Naive thymus-derived CD4-positive, alpha-beta T cell (primary cell): ENCODE measurements at regions of chr12 and their contacts with region 1.

Region 1: DNA sequence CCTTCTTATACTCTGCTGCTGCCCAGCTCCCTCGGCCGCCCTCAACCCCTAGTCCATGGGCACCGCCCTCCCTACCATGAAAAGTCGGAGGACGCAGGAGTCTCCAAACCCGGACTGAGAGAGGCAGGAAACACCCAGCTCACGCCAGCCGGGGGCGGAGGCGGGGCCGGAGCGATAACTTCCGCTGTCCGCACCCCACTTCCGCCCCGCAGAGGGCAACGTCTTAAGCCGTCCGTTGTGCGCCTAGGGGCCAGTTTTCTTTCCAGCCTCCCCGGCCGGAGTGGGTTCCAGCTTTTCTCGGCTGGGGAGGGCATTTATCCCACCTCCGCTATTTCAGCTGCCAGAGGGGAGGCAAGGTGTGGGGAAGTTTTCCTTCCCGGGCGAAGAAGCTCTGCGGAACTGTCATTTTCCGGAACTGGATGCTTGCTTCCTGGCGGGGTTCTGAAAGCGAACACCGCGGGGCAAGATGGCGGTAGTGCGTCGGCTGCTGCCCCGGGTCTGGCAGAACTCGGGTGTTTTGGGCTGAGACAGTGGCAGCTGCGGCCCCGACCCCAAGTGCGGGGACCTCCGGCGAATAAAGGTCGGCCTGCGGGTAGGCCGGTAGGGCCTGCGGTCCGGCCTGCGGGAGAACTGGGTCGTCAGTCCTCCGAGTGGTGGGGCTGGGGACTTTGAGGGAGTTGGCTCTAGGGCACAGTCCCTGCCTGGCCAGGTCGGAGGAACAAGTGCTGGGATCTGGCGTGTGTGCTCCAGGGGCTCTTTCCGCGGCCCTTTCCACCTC is at the starts of genes KCTD10 and UBE3B:
- DNase-seq: peak; percentile 81 to 90 (median 87)
- ATAC-seq: peak; percentile 97
- H3K4me3 ChIP-seq: peak within 1 kb of the TSS; percentile 93
- H3K4me3 Mint-ChIP-seq: peak within 1 kb of the TSS; percentile 89 to 99 (median 96)
- H3K27ac ChIP-seq: peak within 1 kb of the TSS; percentile 90
- H3K27ac Mint-ChIP-seq: peak within 1 kb of the TSS; percentile 96 to 99 (median 98)
- H3K4me1 ChIP-seq: peaks cover 21 to 26% of the 10 kb centered on the region in 2 donors
- H3K4me1 Mint-ChIP-seq: peaks cover 24 to 60% (median 49%) of the 10 kb centered on the region in 7 donors
- H3K27me3 ChIP-seq: no peaks in the 10 kb centered on the region
- H3K27me3 Mint-ChIP-seq: no peaks in the 10 kb centered on the region
- total RNA-seq, gene KCTD10: 28.6 to 41.1 (median 29.1) TPM
- total RNA-seq, gene UBE3B: 28.7 to 62.8 (median 35.6) TPM

Region 2: GRCh38 chr12:109052414-109053323 is 424.7 kb before region 1 on chr12 and contains the start of gene USP30:
- CTCF ChIA-PET with region 1: no interaction called
- POLR2A ChIA-PET with region 1: no interaction called
- intact Hi-C with region 1: loop called in 1 of 2 experiments (anchors 1 kb)
- DNase-seq: peak; percentile 68 to 86 (median 77)
- ATAC-seq: peak; percentile 93
- H3K4me3 ChIP-seq: peak within 1 kb of the TSS; percentile 91
- H3K4me3 Mint-ChIP-seq: peak within 1 kb of the TSS; percentile 86 to 99 (median 96)
- H3K27ac ChIP-seq: peak within 1 kb of the TSS; percentile 89
- H3K27ac Mint-ChIP-seq: peak within 1 kb of the TSS; percentile 89 to 98 (median 95)
- H3K4me1 ChIP-seq: peaks cover 13% of the 10 kb centered on the region in 2 donors
- H3K4me1 Mint-ChIP-seq: peaks cover 14 to 27% (median 17%) of the 10 kb centered on the region in 7 donors
- H3K27me3 ChIP-seq: no peaks in the 10 kb centered on the region
- H3K27me3 Mint-ChIP-seq: no peaks in the 10 kb centered on the region
- total RNA-seq, gene USP30: 7.8 to 15.7 (median 12.9) TPM

Region 3: GRCh38 chr12:109154451-109155438 is 322.6 kb before region 1 on chr12:
- CTCF ChIA-PET with region 1: no interaction called
- POLR2A ChIA-PET with region 1: no interaction called
- intact Hi-C with region 1: loop called in 1 of 2 experiments (anchors 2 kb)
- DNase-seq: peak; percentile 58 to 87 (median 76)
- ATAC-seq: peak; percentile 99
- H3K4me3 ChIP-seq: peak overlapping the region; percentile 73
- H3K4me3 Mint-ChIP-seq: peak overlapping the region; percentile 85 to 98 (median 95)
- H3K27ac ChIP-seq: peak overlapping the region; percentile 61
- H3K27ac Mint-ChIP-seq: peak overlapping the region; percentile 71 to 95 (median 87)
- H3K4me1 ChIP-seq: peaks cover 5 to 10% of the 10 kb centered on the region in 2 donors
- H3K4me1 Mint-ChIP-seq: peaks cover 13 to 33% (median 19%) of the 10 kb centered on the region in 7 donors
- H3K27me3 ChIP-seq: no peaks in the 10 kb centered on the region
- H3K27me3 Mint-ChIP-seq: peaks cover 0 to 19% (median 0%) of the 10 kb centered on the region in 5 donors

Region 4: GRCh38 chr12:109277899-109278762 is 199.2 kb before region 1 on chr12:
- CTCF ChIA-PET with region 1: no interaction called
- POLR2A ChIA-PET with region 1: no interaction called
- intact Hi-C with region 1: no loop called
- DNase-seq: no peak
- ATAC-seq: no peak
- H3K4me3 ChIP-seq: no peak overlapping the region
- H3K4me3 Mint-ChIP-seq: no peak overlapping the region
- H3K27ac ChIP-seq: no peak overlapping the region
- H3K27ac Mint-ChIP-seq: no peak overlapping the region
- H3K4me1 ChIP-seq: no peaks in the 10 kb centered on the region
- H3K4me1 Mint-ChIP-seq: peaks cover 0 to 5% (median 0%) of the 10 kb centered on the region in 7 donors
- H3K27me3 ChIP-seq: no peaks in the 10 kb centered on the region
- H3K27me3 Mint-ChIP-seq: peaks cover 2 to 15% (median 5%) of the 10 kb centered on the region in 5 donors

Region 5: DNA sequence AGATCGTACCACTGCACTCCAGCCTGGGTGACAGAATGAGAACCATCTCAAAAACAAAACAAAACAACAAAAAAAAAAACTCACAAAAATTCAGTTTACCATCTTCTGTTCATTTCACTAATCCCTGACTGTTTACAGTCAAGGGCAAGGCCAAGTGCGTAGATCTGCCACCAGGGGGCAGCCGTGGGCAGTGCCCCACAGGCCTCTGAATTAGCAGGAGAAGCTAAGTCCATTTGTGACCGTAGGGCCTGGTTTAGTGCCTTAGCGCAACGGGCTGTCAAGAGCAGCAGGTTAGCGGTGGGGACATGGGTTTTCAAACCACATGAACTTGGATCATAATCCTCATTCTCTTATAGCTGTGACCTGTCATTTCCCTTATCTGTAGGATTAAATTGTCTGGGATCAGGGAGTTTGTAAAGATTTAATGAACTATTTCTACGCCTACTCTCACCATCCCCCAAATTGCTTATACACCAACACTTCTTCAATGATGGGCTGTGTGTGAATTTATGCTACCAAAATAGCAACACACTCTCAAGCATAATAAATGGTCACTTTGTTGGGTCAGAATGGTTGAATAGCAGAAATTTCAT is 49.2 kb before region 1 on chr12:
- CTCF ChIA-PET with region 1: interaction called, 3 read pairs
- POLR2A ChIA-PET with region 1: interaction called, 3 read pairs
- intact Hi-C with region 1: loop called (anchors 2 to 5 kb)
- DNase-seq: peak; percentile 31 to 73 (median 66)
- ATAC-seq: peak; percentile 94
- H3K4me3 ChIP-seq: no peak overlapping the region
- H3K4me3 Mint-ChIP-seq: no peak overlapping the region
- H3K27ac ChIP-seq: no peak overlapping the region
- H3K27ac Mint-ChIP-seq: no peak overlapping the region
- H3K4me1 ChIP-seq: peaks cover under 1 to 2% of the 10 kb centered on the region in 2 donors
- H3K4me1 Mint-ChIP-seq: peaks cover 3 to 9% (median 7%) of the 10 kb centered on the region in 7 donors
- H3K27me3 ChIP-seq: no peaks in the 10 kb centered on the region
- H3K27me3 Mint-ChIP-seq: peaks cover 2 to 26% (median 10%) of the 10 kb centered on the region in 5 donors

Region 6: DNA sequence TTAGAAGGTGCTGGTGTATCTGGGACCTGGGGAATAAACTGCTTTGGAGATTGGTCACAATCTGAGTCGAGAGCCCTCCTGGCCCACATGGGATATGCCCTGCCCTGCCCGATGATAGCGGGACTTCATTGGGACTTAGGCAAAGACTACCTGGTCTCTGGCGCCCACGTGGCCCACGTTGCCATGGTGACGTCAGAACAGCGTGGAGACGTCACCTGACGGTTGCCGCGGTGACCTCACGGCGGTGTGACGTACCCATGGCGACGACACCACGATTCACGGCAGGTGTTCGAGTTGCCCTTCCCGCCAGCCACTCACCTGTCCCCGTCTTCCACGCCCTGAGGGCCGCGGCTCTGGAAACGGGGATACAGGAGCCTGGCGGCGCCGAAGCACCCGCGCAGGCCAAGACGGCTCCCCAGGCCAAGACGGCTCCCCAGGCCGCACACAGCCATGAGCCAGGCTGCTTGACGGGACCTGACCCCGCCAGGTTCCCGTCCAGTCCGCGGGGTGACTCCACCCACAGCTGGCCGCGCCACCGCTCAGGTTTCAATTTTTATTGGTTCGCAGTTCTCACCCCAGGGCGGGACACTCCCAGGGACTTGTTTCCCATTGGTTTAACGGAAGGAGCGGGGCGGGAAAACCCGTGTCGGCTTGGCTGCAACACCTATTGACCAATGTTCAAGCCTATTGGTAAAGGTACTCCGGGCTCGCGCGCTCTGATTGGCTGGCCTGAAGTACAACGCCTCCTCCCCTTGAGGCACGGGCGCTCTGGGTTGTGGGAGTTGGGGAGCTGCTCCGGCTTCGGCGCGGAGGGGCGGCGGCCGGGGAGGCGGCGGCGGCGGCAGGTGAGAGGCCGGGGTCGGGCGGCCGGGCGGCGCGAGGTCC is 95.9 kb after region 1 on chr12 and contains the starts of genes MMAB and MVK:
- CTCF ChIA-PET with region 1: no interaction called
- POLR2A ChIA-PET with region 1: interaction called, 9 read pairs
- intact Hi-C with region 1: loop called (anchors 1 kb)
- DNase-seq: peak; percentile 87 to 99 (median 99)
- ATAC-seq: peak; percentile 97
- H3K4me3 ChIP-seq: peak within 1 kb of the TSS; percentile 75
- H3K4me3 Mint-ChIP-seq: peak within 1 kb of the TSS; percentile 90 to 97 (median 94)
- H3K27ac ChIP-seq: peak within 1 kb of the TSS; percentile 95
- H3K27ac Mint-ChIP-seq: peak within 1 kb of the TSS; percentile 87 to 100 (median 95)
- H3K4me1 ChIP-seq: peaks cover 13 to 16% of the 10 kb centered on the region in 2 donors
- H3K4me1 Mint-ChIP-seq: peaks cover 9 to 39% (median 36%) of the 10 kb centered on the region in 7 donors
- H3K27me3 ChIP-seq: no peaks in the 10 kb centered on the region
- H3K27me3 Mint-ChIP-seq: no peaks in the 10 kb centered on the region
- total RNA-seq, gene MMAB: 13.5 to 24.7 (median 20.1) TPM
- total RNA-seq, gene MVK: 10.0 to 14.8 (median 11.7) TPM

Region 7: GRCh38 chr12:109713187-109713984 is 236.0 kb after region 1 on chr12 and contains the start of gene FAM222A:
- CTCF ChIA-PET with region 1: no interaction called
- POLR2A ChIA-PET with region 1: no interaction called
- intact Hi-C with region 1: loop called (anchors 1 kb)
- DNase-seq: peak; percentile 94 to 99 (median 98)
- ATAC-seq: peak; percentile 94
- H3K4me3 ChIP-seq: peak within 1 kb of the TSS; percentile 41
- H3K4me3 Mint-ChIP-seq: peak within 1 kb of the TSS; percentile 57 to 81 (median 72)
- H3K27ac ChIP-seq: peak within 1 kb of the TSS; percentile 55
- H3K27ac Mint-ChIP-seq: peak within 1 kb of the TSS in 1 of 9 donors; percentile 48
- H3K4me1 ChIP-seq: peaks cover 3 to 11% of the 10 kb centered on the region in 2 donors
- H3K4me1 Mint-ChIP-seq: peaks cover 0 to 4% (median 0%) of the 10 kb centered on the region in 7 donors
- H3K27me3 ChIP-seq: peaks cover 0 to 6% of the 10 kb centered on the region in 2 donors
- H3K27me3 Mint-ChIP-seq: peaks cover 29 to 65% (median 30%) of the 10 kb centered on the region in 5 donors
- total RNA-seq, gene FAM222A: 0.24 to 1.6 (median 0.80) TPM

Region 8: DNA sequence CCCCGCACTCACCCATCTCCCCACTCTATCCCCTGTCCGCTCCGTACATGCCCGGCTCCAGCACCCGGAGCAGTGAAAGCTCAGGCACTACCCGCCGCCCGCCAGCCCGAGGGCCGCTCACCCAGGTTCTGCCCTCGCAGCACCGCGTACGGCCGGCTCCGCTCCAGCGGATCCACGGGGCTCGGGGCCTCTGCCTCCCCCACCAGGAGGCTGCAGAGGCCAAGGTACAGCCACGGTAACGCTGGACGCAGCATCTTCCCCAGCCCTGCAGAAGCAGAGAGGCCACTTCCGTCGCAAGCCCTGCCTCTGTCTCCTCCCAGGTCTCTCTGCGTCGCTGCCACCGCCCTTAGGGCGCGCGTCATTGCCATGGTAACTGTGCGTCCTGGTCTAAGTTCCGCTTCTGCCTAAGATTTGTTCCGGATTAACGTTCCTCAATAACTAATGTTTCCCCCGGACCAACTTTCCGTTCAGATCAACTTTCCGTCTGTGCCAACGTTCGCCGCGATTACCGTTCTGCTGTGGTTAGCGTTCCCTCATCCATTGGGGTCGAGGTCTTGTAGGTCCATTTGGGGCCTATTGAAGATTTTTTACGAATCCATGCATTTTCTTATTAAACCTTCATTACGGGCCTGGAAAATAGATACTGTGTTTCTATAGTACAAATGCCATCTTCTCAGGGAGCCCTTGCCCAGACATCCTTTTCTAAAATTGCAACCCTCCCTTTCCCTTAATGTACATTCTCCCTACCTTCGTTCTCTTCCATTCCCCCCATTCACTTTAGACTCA is 571.1 kb after region 1 on chr12 and contains the start of gene C12orf76:
- CTCF ChIA-PET with region 1: no interaction called
- POLR2A ChIA-PET with region 1: no interaction called
- intact Hi-C with region 1: loop called in 1 of 2 experiments (anchors 2 kb)
- DNase-seq: peak; percentile 67 to 92 (median 90)
- ATAC-seq: peak; percentile 100
- H3K4me3 ChIP-seq: peak within 1 kb of the TSS; percentile 81
- H3K4me3 Mint-ChIP-seq: peak within 1 kb of the TSS; percentile 84 to 97 (median 93)
- H3K27ac ChIP-seq: peak within 1 kb of the TSS; percentile 77
- H3K27ac Mint-ChIP-seq: peak within 1 kb of the TSS; percentile 90 to 99 (median 96)
- H3K4me1 ChIP-seq: peaks cover 19% of the 10 kb centered on the region in 2 donors
- H3K4me1 Mint-ChIP-seq: peaks cover 16 to 46% (median 34%) of the 10 kb centered on the region in 7 donors
- H3K27me3 ChIP-seq: no peaks in the 10 kb centered on the region
- H3K27me3 Mint-ChIP-seq: no peaks in the 10 kb centered on the region
- total RNA-seq, gene C12orf76: 14.6 to 28.7 (median 27.8) TPM